PC-9 (cell line): ENCODE measurements at regions of chr13 and their contacts with region 1.

Region 1: DNA sequence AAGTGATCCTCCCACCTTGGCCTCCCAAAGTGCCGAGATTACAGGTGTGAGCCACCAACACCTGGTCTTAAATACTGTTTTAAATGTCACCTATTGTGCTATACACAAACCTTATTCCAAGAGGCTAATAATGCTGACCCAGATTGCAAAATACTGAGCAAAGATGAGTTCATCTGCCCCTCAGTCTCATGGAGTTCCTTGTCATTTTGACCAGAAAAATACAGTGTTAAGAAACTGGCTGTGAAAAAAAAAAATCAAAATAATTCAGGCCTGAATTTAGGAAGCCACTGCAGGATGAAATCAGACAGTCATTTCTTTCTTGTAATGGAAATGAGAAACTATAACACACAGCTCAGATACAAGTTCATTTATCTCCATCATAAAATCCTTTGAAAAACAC is 59.9 kb downstream of the TBC1D4 start:
- DNase-seq: no peak
- H3K4me3 ChIP-seq: no peak overlapping the region
- H3K27ac ChIP-seq: no peak overlapping the region
- H3K4me1 ChIP-seq: peaks cover 27% of the 10 kb centered on the region
- H3K27me3 ChIP-seq: no peaks in the 10 kb centered on the region
- CTCF ChIP-seq: no peak

Region 2: GRCh38 chr13:75437582-75438318 is 15.7 kb after region 1 on chr13:
- CTCF ChIA-PET with region 1: no interaction called
- POLR2A ChIA-PET with region 1: no interaction called
- intact Hi-C with region 1: loop called (anchors 2 kb)
- DNase-seq: no peak
- H3K4me3 ChIP-seq: no peak overlapping the region
- H3K27ac ChIP-seq: no peak overlapping the region
- H3K4me1 ChIP-seq: 0 out of 2 replicates have a peak, but pooled peaks cover 5% of the 10 kb centered on the region
- H3K27me3 ChIP-seq: no peaks in the 10 kb centered on the region
- CTCF ChIP-seq: no peak

Region 3: GRCh38 chr13:75489502-75490263 is 67.7 kb after region 1 on chr13:
- CTCF ChIA-PET with region 1: no interaction called
- POLR2A ChIA-PET with region 1: no interaction called
- intact Hi-C with region 1: no loop called
- DNase-seq: peak; percentile 29 to 82
- H3K4me3 ChIP-seq: peak overlapping the region; percentile 44
- H3K27ac ChIP-seq: peak overlapping the region; percentile 68
- H3K4me1 ChIP-seq: peaks cover 45% of the 10 kb centered on the region
- H3K27me3 ChIP-seq: no peaks in the 10 kb centered on the region
- CTCF ChIP-seq: no peak

Region 4: GRCh38 chr13:75715601-75716523 is 293.8 kb after region 1 on chr13:
- CTCF ChIA-PET with region 1: no interaction called
- POLR2A ChIA-PET with region 1: no interaction called
- intact Hi-C with region 1: no loop called
- DNase-seq: peak in 1 of 2 experiments; percentile 52
- H3K4me3 ChIP-seq: no peak overlapping the region
- H3K27ac ChIP-seq: peak overlapping the region; percentile 95
- H3K4me1 ChIP-seq: peaks cover 21% of the 10 kb centered on the region
- H3K27me3 ChIP-seq: no peaks in the 10 kb centered on the region
- CTCF ChIP-seq: no peak